CD4-positive, alpha-beta memory T cell (primary cell): ENCODE measurements at regions of chr11 and their contacts with region 1.

Region 1: DNA sequence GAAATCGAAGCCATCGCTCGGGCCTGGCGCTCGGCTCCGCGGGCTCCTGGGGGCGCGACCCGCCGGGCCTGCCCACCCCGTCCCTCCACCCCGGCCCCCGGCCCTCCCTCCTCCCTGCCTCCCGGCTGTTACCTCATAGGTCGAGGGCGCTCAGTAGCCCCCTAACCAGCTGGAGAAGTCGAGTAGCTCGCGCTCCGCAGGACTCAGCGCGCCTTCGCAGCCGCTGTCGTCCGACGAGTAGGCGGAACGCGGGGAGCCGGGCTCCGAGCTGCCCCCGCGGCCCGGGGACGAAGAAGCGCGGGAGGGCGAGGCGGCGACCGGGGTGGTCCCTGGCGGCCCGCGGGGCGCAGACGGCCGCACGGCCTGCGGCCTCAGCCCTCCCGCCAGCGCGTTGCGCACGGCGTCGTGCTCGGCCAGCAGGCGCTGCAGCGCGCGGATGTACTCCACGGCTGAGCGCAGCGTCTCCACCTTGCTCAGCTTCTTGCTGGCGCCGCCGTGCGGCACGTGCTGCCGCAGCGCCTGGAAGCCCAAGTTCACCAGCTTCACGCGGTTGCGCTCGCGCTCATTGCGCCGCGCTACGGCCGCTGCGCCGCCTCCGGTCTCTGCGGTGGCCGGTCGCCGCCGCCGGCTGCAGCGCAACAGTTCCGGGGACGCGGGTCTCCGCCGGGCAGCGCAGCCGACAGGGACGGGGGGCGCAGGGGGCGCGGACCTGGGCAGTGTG is 627 bp downstream of the ASCL2 start:
- DNase-seq: peak in 4 of 5 donors; percentile 41 to 54 (median 46)
- H3K4me3 ChIP-seq: no peak overlapping the region
- H3K4me3 Mint-ChIP-seq: peak overlapping the region in 2 of 8 donors; percentile 43 to 74
- H3K27ac ChIP-seq: no peak overlapping the region
- H3K27ac Mint-ChIP-seq: no peak overlapping the region
- H3K4me1 ChIP-seq: peaks cover 43% of the 10 kb centered on the region
- H3K4me1 Mint-ChIP-seq: peaks cover 14 to 29% (median 21%) of the 10 kb centered on the region in 4 donors
- H3K27me3 ChIP-seq: peaks cover 11% of the 10 kb centered on the region
- H3K27me3 Mint-ChIP-seq: peaks cover 11 to 23% of the 10 kb centered on the region in 2 donors

Region 2: GRCh38 chr11:2211113-2211971 is 58.4 kb before region 1 on chr11:
- CTCF ChIA-PET with region 1: no interaction called
- POLR2A ChIA-PET with region 1: no interaction called
- intact Hi-C with region 1: loop called (anchors 10 kb)
- DNase-seq: peak in 1 of 5 donors; percentile 25
- H3K4me3 ChIP-seq: no peak overlapping the region
- H3K4me3 Mint-ChIP-seq: no peak overlapping the region
- H3K27ac ChIP-seq: no peak overlapping the region
- H3K27ac Mint-ChIP-seq: no peak overlapping the region
- H3K4me1 ChIP-seq: peaks cover 12% of the 10 kb centered on the region
- H3K4me1 Mint-ChIP-seq: peaks cover 5 to 12% (median 10%) of the 10 kb centered on the region in 4 donors
- H3K27me3 ChIP-seq: no peaks in the 10 kb centered on the region
- H3K27me3 Mint-ChIP-seq: peaks cover 1 to 3% of the 10 kb centered on the region in 2 donors